CD4-positive, alpha-beta T cell (primary cell): ENCODE measurements at regions of chr3 and their contacts with region 1.

Region 1: GRCh38 chr3:138594150-138594934 is at the start of gene CEP70:
- DNase-seq: peak; percentile 75 to 96 (median 86)
- ATAC-seq: peak; percentile 90
- H3K4me3 ChIP-seq: peak within 1 kb of the TSS; percentile 89
- H3K4me3 Mint-ChIP-seq: peak within 1 kb of the TSS; percentile 94
- H3K27ac ChIP-seq: peak within 1 kb of the TSS; percentile 84 to 94
- H3K27ac Mint-ChIP-seq: peak within 1 kb of the TSS; percentile 96
- H3K4me1 ChIP-seq: peaks cover 21% of the 10 kb centered on the region
- H3K4me1 Mint-ChIP-seq: peaks cover 13% of the 10 kb centered on the region
- H3K27me3 ChIP-seq: no peaks in the 10 kb centered on the region
- H3K27me3 Mint-ChIP-seq: no peaks in the 10 kb centered on the region
- CTCF ChIP-seq: peak; percentile 89
- total RNA-seq, gene CEP70: 21.5 to 23.0 TPM

Region 2: DNA sequence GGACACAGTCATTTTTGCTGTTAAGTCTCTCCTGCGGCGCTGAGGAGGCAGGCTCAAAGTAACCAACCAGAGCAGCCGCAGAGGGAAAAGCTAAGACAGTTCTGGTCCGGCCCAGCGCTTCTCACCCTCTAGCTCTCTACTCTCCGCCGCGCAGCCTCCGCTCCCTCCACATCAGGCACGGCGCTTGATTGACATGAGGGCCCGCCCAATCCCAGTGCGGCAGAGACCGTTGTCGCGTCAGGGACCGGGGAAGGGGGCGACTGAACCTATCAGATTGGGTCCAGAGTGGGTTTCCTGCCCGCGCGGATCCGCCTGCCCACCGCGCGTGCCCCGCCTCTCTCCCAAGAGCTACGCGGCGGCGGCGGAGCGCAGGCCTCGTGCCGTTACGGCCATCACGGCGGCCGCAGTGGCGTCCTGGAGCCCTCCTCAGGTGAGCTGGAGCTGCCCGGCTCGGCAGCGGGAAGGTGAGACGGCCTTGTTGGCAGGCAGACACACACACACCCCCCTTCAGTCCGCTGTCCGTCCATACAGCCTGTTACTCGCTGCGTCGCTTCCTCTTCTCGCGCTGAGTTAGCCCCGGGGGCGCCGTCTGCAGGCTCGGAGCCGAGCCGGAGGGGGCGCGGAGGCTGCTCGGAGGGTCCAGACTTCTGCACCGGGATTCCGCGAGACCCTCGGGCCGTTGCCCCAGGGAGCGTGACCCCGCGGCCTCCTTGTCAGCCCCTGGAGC is 1732.3 kb before region 1 on chr3 and contains the start of gene NCK1:
- CTCF ChIA-PET with region 1: no interaction called
- POLR2A ChIA-PET with region 1: no interaction called
- intact Hi-C with region 1: loop called in 1 of 2 experiments (anchors 10 kb)
- DNase-seq: peak; percentile 96 to 99 (median 98)
- ATAC-seq: peak; percentile 95
- H3K4me3 ChIP-seq: peak within 1 kb of the TSS; percentile 93
- H3K4me3 Mint-ChIP-seq: peak within 1 kb of the TSS; percentile 92
- H3K27ac ChIP-seq: peak within 1 kb of the TSS; percentile 93 to 94
- H3K27ac Mint-ChIP-seq: peak within 1 kb of the TSS; percentile 97
- H3K4me1 ChIP-seq: peaks cover 37% of the 10 kb centered on the region
- H3K4me1 Mint-ChIP-seq: peaks cover 65% of the 10 kb centered on the region
- H3K27me3 ChIP-seq: no peaks in the 10 kb centered on the region
- H3K27me3 Mint-ChIP-seq: no peaks in the 10 kb centered on the region
- CTCF ChIP-seq: no peak
- total RNA-seq, gene NCK1: 52.9 to 55.0 TPM

Region 3: DNA sequence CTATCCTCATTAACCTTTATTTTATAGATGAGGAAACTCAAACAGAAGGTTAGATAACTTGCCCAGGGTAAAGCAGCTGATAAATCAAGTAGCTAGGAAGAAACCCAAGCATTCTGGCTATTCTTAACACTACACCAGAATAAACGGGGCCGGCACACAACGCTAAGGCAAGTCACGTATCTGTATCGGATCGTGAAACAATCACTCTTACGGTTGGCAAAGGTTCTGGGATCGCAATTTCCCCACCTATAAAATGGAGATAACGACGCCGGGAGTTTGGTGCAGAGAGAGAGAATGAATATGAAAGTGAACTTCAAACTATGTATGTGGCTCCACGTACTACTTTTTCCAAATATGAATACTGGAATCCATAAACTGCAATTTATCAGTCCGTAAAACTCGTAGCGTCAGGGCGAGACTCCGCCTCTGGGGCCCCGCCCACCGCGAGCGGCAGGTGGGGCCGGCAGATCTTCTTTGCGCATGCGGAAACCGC is 407.5 kb before region 1 on chr3:
- CTCF ChIA-PET with region 1: no interaction called
- POLR2A ChIA-PET with region 1: interaction called, 5 read pairs
- intact Hi-C with region 1: loop called (anchors 5 kb)
- DNase-seq: peak; percentile 78 to 95 (median 88)
- ATAC-seq: peak; percentile 92
- H3K4me3 ChIP-seq: peak overlapping the region; percentile 91
- H3K4me3 Mint-ChIP-seq: peak overlapping the region; percentile 97
- H3K27ac ChIP-seq: peak overlapping the region; percentile 72 to 83
- H3K27ac Mint-ChIP-seq: peak overlapping the region; percentile 92
- H3K4me1 ChIP-seq: peaks cover 16% of the 10 kb centered on the region
- H3K4me1 Mint-ChIP-seq: peaks cover 46% of the 10 kb centered on the region
- H3K27me3 ChIP-seq: peaks cover 0 to 8% of the 10 kb centered on the region in 2 experiments
- H3K27me3 Mint-ChIP-seq: peaks cover 4% of the 10 kb centered on the region
- CTCF ChIP-seq: no peak

Region 4: DNA sequence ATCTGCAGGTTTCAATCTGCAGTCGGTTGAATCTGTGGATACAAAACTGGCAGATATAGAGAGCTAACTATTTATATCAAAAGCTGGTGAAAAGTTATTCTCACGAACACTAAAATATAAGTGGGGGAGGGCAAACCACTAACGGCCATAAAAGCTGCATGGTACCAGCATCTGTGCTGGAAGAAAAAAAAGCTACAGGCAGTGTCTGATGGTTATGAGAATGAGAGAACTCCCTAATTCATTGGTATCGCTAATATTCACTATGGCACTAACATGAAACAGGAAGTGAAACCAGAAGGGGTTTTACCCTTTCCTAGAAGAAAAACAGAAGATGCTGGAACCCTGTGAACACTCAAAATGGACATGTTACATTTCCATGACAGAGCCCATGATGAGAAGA is 16.2 kb before region 1 on chr3:
- CTCF ChIA-PET with region 1: no interaction called
- POLR2A ChIA-PET with region 1: interaction called, 12 read pairs
- intact Hi-C with region 1: no loop called
- DNase-seq: peak in 3 of 14 experiments; percentile 27 to 39 (median 35)
- ATAC-seq: no peak
- H3K4me3 ChIP-seq: peak overlapping the region; percentile 43
- H3K4me3 Mint-ChIP-seq: peak overlapping the region; percentile 63
- H3K27ac ChIP-seq: peak overlapping the region in 1 of 2 donors; percentile 5
- H3K27ac Mint-ChIP-seq: peak overlapping the region; percentile 13
- H3K4me1 ChIP-seq: peaks cover 5% of the 10 kb centered on the region
- H3K4me1 Mint-ChIP-seq: peaks cover 17% of the 10 kb centered on the region
- H3K27me3 ChIP-seq: no peaks in the 10 kb centered on the region
- H3K27me3 Mint-ChIP-seq: no peaks in the 10 kb centered on the region
- CTCF ChIP-seq: no peak

Region 5: DNA sequence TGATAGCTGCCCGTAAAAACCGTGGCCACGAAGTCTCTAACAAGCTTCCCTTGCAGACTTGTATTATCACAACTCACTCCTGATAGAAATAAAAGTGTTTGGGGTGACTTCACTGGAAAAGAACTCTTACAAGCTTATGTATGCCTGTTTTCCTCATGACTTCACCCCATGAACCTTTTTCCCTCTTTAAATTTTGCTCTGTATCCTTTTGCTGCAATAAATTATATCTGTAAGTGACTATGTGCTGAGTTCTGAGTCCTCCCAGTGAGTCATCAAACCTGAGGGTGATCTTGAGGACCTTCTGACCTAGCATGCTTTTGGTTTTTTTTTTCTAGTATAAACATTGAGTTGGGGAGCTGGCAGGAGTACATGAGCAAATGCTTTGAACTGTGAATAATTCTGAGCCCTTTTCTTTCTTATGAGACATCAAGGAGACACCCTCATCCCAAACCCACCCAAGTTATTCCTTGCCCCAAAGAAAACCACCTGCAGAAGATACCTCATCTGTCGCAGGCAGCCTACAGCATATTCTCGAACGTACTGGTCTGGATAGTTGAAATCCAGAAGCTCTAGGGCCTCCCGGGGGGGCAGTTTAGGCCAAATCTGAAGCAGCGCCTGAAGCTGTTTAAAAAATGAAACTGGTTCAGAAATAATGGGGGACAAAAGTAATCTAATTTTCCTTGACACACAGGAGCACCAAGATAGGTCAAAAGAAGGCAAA is 100.1 kb after region 1 on chr3:
- CTCF ChIA-PET with region 1: no interaction called
- POLR2A ChIA-PET with region 1: no interaction called
- intact Hi-C with region 1: loop called in 1 of 2 experiments (anchors 5 kb)
- DNase-seq: no peak
- ATAC-seq: no peak
- H3K4me3 ChIP-seq: no peak overlapping the region
- H3K4me3 Mint-ChIP-seq: no peak overlapping the region
- H3K27ac ChIP-seq: no peak overlapping the region
- H3K27ac Mint-ChIP-seq: no peak overlapping the region
- H3K4me1 ChIP-seq: no peaks in the 10 kb centered on the region
- H3K4me1 Mint-ChIP-seq: no peaks in the 10 kb centered on the region
- H3K27me3 ChIP-seq: no peaks in the 10 kb centered on the region
- H3K27me3 Mint-ChIP-seq: no peaks in the 10 kb centered on the region
- CTCF ChIP-seq: no peak

Region 6: DNA sequence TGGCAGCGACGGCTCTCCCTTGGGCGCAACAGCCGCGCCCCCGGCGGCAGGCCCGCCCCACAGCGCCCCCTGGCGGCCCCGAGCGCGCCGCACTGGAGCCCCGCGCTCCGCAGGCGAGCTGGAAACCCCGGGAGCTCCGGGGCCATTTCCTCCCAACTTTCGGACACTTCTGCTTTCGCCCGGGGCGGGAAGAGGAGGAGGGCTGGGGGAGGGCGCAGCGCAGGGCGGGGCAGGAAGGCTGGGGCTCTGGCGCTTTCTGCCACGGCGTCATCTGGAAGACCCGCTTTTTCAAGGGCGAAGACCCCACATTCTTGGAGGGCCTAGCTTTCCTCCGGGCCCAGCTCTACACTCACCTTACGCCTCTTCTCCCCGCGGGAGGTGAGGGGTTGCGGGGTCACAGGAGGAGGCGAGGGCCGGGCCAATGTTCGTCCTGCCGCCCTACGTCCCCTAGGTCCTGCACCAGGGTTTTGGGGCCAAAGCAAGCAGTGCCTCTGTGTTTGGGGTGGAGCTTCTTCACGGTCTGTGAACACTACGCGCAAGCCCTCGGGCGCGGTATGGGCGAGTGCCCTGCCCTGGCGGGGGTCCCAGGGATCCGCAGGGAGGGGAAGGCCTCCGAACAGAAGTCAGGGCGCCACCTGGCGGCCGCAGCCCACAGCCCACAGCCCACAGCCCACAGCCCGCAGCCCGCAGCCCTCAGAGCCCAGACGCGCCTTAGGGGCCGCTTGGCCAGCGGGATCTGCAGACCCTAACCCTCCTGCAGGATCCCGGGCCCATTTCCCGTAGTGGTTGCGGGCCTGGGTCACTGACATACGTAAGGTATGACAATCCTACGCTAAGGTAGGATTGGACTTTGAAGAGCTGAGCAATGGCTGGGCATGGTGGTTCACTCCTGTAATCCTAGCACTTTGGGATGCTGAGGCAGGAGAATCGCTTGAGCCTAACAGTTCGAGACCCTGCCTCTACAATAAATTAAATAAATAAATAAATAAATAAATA is 321.5 kb after region 1 on chr3:
- CTCF ChIA-PET with region 1: interaction called, 64 read pairs
- POLR2A ChIA-PET with region 1: interaction called, 49 read pairs
- intact Hi-C with region 1: loop called (anchors 1 kb)
- DNase-seq: peak; percentile 68 to 90 (median 75)
- ATAC-seq: peak; percentile 87
- H3K4me3 ChIP-seq: peak overlapping the region; percentile 82
- H3K4me3 Mint-ChIP-seq: peak overlapping the region; percentile 87
- H3K27ac ChIP-seq: no peak overlapping the region
- H3K27ac Mint-ChIP-seq: peak overlapping the region; percentile 47
- H3K4me1 ChIP-seq: peaks cover 18% of the 10 kb centered on the region
- H3K4me1 Mint-ChIP-seq: no peaks in the 10 kb centered on the region
- H3K27me3 ChIP-seq: peaks cover 0 to 4% of the 10 kb centered on the region in 2 experiments
- H3K27me3 Mint-ChIP-seq: peaks cover 5% of the 10 kb centered on the region
- CTCF ChIP-seq: peak; percentile 85

Region 7: DNA sequence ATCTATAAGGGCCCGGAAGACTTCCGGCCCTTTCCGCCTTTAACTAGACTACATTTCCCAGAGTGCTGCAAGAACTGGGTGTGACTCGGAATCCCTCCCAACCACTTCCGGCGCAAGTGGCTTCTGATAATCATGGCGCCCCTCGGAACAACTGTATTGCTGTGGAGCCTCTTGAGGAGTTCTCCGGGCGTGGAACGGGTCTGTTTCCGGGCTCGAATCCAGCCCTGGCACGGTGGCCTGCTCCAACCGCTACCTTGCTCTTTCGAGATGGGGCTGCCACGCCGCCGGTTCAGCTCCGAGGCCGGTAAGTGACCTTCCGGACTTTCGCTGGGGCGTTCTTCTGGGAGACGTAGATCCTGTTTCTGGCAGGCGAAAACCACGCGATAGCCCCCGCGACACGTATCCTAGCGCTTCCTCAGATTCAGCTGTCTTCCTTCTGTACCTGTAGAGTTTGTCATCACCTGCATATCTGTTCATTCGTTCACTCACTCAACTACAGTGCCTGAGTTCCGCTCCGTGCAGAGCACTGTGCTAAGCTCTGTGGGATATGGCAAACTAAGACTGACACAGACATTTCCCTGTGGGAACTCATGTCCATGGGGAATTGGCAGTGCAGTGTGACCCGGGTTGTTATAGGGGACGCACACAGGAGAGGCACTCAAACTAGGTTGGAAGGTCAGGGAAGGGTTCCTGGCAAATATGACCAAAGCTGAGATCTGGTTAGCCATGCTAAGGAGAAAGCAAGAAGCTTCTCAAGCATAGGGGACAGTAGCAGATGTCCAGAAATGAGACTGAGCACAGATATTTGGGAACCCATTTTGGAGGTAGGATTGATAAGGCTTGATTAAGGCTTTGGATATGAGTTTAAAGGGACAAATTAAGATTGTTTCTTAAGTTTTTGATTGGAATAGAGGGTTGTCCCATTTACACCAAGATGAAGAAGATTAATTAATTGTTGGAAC is 749.8 kb after region 1 on chr3 and contains the start of gene MRPS22:
- CTCF ChIA-PET with region 1: no interaction called
- POLR2A ChIA-PET with region 1: interaction called, 4 read pairs
- intact Hi-C with region 1: loop called (anchors 5 kb)
- DNase-seq: peak; percentile 64 to 92 (median 75)
- ATAC-seq: peak; percentile 98
- H3K4me3 ChIP-seq: peak within 1 kb of the TSS; percentile 92
- H3K4me3 Mint-ChIP-seq: no peak within 1 kb of the TSS
- H3K27ac ChIP-seq: peak within 1 kb of the TSS; percentile 73 to 93
- H3K27ac Mint-ChIP-seq: no peak within 1 kb of the TSS
- H3K4me1 ChIP-seq: peaks cover 21% of the 10 kb centered on the region
- H3K4me1 Mint-ChIP-seq: peaks cover 5% of the 10 kb centered on the region
- H3K27me3 ChIP-seq: no peaks in the 10 kb centered on the region
- H3K27me3 Mint-ChIP-seq: peaks cover 8% of the 10 kb centered on the region
- CTCF ChIP-seq: no peak
- total RNA-seq, gene MRPS22: 39.6 to 42.6 TPM